IMR-90 (cell line): ENCODE measurements at regions of chr4 and their contacts with region 1.

Region 1: GRCh38 chr4:1130316-1131186 is 17.2 kb upstream of the RNF212 start:
- DNase-seq: peak; percentile 76
- ATAC-seq: peak; percentile 100
- H3K4me3 ChIP-seq: no peak overlapping the region
- H3K27ac ChIP-seq: no peak overlapping the region
- H3K4me1 ChIP-seq: no peaks in the 10 kb centered on the region
- H3K27me3 ChIP-seq: peaks cover 9% of the 10 kb centered on the region
- CTCF ChIP-seq: peak; percentile 98
- POLR2A ChIP-seq: peak; percentile 50; the same call in 1 of the 2 replicates
- RAD21 ChIP-seq: peak; percentile 98

Region 2: DNA sequence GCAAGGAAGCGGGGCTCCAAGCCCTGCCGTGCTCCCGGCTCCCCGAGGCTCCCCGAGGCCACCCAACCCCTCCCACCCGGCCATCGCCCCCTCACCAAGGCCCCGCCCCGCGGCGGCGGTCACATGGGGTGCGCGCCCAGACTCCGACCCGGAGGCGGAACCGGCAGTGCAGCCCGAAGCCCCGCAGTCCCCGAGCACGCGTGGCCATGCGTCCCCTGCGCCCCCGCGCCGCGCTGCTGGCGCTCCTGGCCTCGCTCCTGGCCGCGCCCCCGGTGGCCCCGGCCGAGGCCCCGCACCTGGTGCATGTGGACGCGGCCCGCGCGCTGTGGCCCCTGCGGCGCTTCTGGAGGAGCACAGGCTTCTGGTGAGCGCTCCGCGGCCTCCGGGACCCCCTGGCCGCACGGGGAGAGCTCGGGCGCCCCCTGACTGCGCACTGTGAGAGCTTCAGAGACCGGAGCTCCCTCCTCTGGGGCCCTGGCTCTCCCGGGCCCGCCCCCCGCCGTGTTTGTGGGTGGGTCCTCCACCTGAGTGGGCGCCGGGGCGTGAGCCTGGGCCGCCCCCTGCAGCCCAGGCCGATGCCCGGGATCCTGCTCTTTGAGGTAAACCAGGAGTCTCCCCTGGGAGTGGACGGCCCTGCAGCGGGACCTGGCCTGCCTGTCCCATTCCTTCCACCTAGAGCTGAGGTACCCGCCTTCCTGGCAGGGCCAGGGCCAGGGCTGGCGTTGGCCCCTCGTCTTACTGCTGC is 143.5 kb before region 1 on chr4 and contains the start of gene IDUA:
- CTCF ChIA-PET with region 1: no interaction called
- POLR2A ChIA-PET with region 1: no interaction called
- dilution Hi-C with region 1: no loop called
- in situ Hi-C with region 1: no loop called
- intact Hi-C with region 1: no loop called
- DNase-seq: peak; percentile 53
- ATAC-seq: peak; percentile 88
- H3K4me3 ChIP-seq: peak within 1 kb of the TSS; percentile 93
- H3K27ac ChIP-seq: peak within 1 kb of the TSS; percentile 81
- H3K4me1 ChIP-seq: peaks cover 7% of the 10 kb centered on the region; the same call in 1 of the 2 replicates
- H3K27me3 ChIP-seq: no peaks in the 10 kb centered on the region
- CTCF ChIP-seq: peak; percentile 52
- POLR2A ChIP-seq: 0 out of 2 replicates have a peak, but pooled peaks have one; percentile 6
- RAD21 ChIP-seq: peak; percentile 46; the same call in 1 of the 2 replicates
- total RNA-seq, gene IDUA: 0.72 and 1.7 TPM in 2 replicates

Region 3: DNA sequence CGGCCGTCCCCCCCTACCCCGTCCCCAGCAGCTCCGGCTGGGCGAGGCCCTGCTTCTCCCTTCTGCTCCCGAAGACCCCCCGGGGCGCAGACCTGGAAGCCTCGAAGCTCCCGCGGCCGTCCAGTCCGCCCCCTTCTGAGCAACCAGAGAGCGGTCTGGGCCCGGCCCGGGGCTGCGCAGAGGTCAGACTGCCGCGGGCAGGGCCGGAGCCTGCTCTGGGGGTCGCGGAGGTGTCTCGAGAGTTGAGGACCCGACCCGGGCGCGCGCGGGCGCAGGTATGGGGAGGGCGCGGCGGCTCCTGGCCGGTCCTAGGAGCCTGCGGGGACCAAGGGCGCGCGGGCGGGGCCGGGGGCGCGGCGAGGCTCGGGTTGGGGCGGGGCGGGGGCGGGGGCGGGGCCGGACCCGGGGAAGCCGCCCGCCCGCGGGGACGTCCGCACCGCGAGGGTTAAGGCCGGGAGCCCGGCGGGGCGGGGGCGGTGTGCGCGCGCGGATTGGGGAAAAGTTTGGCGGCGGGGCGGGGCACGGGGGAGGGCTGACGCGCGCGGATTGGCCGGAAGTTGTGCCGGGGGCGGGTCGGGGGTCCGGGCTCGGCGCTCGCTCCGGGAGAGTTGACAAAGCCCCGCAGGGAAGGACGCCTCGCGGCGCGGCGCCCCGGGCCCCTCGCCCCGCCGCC is 119.4 kb before region 1 on chr4 and contains the start of gene FGFRL1:
- CTCF ChIA-PET with region 1: no interaction called
- POLR2A ChIA-PET with region 1: no interaction called
- dilution Hi-C with region 1: no loop called
- in situ Hi-C with region 1: no loop called
- intact Hi-C with region 1: loop called (anchors 5 kb)
- DNase-seq: peak; percentile 77
- ATAC-seq: peak; percentile 76
- H3K4me3 ChIP-seq: peak within 1 kb of the TSS; percentile 50
- H3K27ac ChIP-seq: no peak within 1 kb of the TSS; the same call in 1 of the 2 replicates
- H3K4me1 ChIP-seq: peaks cover 13% of the 10 kb centered on the region
- H3K27me3 ChIP-seq: peaks cover 22% of the 10 kb centered on the region
- CTCF ChIP-seq: no peak
- POLR2A ChIP-seq: peak; percentile 62; the same call in 1 of the 2 replicates
- RAD21 ChIP-seq: no peak
- total RNA-seq, gene FGFRL1: 43.3 and 49.3 TPM in 2 replicates

Region 4: GRCh38 chr4:1207603-1208265 is 77.2 kb after region 1 on chr4:
- CTCF ChIA-PET with region 1: no interaction called
- POLR2A ChIA-PET with region 1: no interaction called
- dilution Hi-C with region 1: no loop called
- in situ Hi-C with region 1: no loop called
- intact Hi-C with region 1: loop called (anchors 1 kb)
- DNase-seq: peak; percentile 87
- ATAC-seq: peak; percentile 78
- H3K4me3 ChIP-seq: no peak overlapping the region
- H3K27ac ChIP-seq: peak overlapping the region; percentile 88
- H3K4me1 ChIP-seq: peaks cover 43% of the 10 kb centered on the region
- H3K27me3 ChIP-seq: no peaks in the 10 kb centered on the region
- CTCF ChIP-seq: no peak
- POLR2A ChIP-seq: no peak
- RAD21 ChIP-seq: peak; percentile 19

Region 5: DNA sequence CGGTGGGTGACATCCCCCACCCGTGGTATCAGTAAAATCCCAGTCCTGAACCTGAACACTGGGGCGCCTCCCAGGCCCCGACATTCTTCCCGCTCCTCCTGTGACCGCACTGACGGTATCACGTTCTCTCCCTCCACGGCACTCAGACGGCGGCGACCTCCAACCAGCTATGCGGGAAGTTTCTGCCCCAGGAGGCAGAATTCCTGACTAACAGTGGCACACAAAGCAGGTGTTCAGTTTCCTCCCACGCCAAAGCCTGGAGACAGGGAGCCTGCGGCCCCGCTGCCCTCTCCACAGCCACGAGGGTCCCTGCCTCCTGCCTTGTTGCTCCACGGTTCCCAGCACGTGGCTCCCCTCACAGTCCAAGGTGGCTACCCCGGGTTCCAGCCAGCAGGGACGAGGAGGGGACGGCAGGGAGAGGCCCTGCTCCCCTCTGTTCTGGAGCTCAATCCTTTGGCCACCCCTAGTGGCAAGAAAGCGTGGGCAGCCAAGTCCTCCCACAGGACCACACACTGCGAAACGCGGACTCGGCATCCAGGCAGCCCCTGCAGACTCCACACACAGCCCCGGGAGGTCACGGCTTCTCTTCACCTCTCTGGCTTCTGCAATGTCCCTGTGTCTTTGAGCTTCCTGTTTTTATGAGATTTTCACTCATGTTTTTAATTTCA is 103.2 kb after region 1 on chr4:
- CTCF ChIA-PET with region 1: interaction called, 6 read pairs
- POLR2A ChIA-PET with region 1: no interaction called
- dilution Hi-C with region 1: no loop called
- in situ Hi-C with region 1: no loop called
- intact Hi-C with region 1: loop called (anchors 1 kb)
- DNase-seq: peak; percentile 34
- ATAC-seq: peak; percentile 76
- H3K4me3 ChIP-seq: no peak overlapping the region
- H3K27ac ChIP-seq: peak overlapping the region; percentile 27
- H3K4me1 ChIP-seq: peaks cover 12% of the 10 kb centered on the region
- H3K27me3 ChIP-seq: no peaks in the 10 kb centered on the region
- CTCF ChIP-seq: peak; percentile 62
- POLR2A ChIP-seq: no peak
- RAD21 ChIP-seq: peak; percentile 68

Region 6: DNA sequence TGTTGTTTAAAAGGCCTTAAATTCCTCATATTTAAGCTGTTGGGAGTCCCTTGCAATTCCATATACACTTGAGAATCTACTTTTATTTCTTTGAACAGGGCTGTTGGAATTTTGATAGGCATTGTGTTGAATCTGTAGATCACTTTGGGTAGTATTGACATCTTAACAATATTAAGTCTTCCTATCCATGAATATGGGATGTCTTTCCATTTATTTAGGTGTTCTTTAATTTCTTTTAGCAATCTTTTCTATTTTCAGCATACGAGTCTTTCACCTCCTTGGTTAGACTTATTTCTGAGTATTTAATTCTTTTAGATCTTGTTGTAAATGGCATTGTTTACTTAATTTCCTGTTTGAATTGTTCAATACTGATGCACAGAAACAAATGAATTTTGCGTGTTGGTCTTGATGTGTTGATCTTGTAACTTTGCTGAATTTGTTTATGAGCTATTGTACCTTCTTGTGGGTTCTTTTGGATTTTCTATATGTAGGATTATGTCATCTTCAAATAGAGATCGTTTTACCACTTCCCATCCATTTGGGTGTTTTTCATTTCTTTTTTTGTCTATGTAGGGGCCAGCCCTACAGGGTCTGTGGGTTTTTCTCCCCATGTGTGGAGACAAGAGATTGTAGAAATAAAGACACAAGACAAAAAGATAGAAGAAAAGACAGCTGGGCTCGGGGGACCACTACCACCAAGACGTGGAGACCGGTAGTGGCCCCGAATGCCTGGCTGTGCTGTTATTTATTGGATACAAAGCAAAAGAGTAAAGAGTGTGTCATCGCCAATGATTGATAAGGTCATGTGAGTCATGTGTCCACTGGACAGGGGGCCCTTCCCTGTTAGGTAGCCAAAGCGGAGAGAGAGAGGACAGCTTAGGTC is 136.6 kb after region 1 on chr4:
- CTCF ChIA-PET with region 1: interaction called, 6 read pairs
- POLR2A ChIA-PET with region 1: no interaction called
- dilution Hi-C with region 1: no loop called
- in situ Hi-C with region 1: loop called (anchors 5 kb)
- intact Hi-C with region 1: loop called (anchors 1 kb)
- DNase-seq: no peak
- ATAC-seq: no peak
- H3K4me3 ChIP-seq: no peak overlapping the region
- H3K27ac ChIP-seq: no peak overlapping the region
- H3K4me1 ChIP-seq: no peaks in the 10 kb centered on the region
- H3K27me3 ChIP-seq: no peaks in the 10 kb centered on the region
- CTCF ChIP-seq: no peak
- POLR2A ChIP-seq: no peak
- RAD21 ChIP-seq: no peak

Region 7: GRCh38 chr4:1346781-1347409 is 216.3 kb after region 1 on chr4 and contains the start of gene UVSSA:
- CTCF ChIA-PET with region 1: interaction called, 4 read pairs
- POLR2A ChIA-PET with region 1: no interaction called
- dilution Hi-C with region 1: no loop called
- in situ Hi-C with region 1: loop called (anchors 5 kb)
- intact Hi-C with region 1: loop called (anchors 1 kb)
- DNase-seq: peak; percentile 99
- ATAC-seq: peak; percentile 91
- H3K4me3 ChIP-seq: peak within 1 kb of the TSS; percentile 84
- H3K27ac ChIP-seq: peak within 1 kb of the TSS; percentile 94
- H3K4me1 ChIP-seq: peaks cover 5% of the 10 kb centered on the region
- H3K27me3 ChIP-seq: no peaks in the 10 kb centered on the region
- CTCF ChIP-seq: no peak
- POLR2A ChIP-seq: no peak; the same call in none of the 2 replicates
- RAD21 ChIP-seq: no peak
- total RNA-seq, gene UVSSA: 1.4 TPM in 2 replicates

Region 8: GRCh38 chr4:1351854-1352633 is 221.5 kb after region 1 on chr4:
- CTCF ChIA-PET with region 1: no interaction called
- POLR2A ChIA-PET with region 1: no interaction called
- dilution Hi-C with region 1: no loop called
- in situ Hi-C with region 1: loop called (anchors 5 kb)
- intact Hi-C with region 1: loop called (anchors 1 kb)
- DNase-seq: peak; percentile 70
- ATAC-seq: peak; percentile 24
- H3K4me3 ChIP-seq: no peak overlapping the region
- H3K27ac ChIP-seq: no peak overlapping the region
- H3K4me1 ChIP-seq: peaks cover 5% of the 10 kb centered on the region
- H3K27me3 ChIP-seq: no peaks in the 10 kb centered on the region
- CTCF ChIP-seq: peak; percentile 86
- POLR2A ChIP-seq: no peak
- RAD21 ChIP-seq: peak; percentile 78